ENCODE measurements at regions of chr5 and their contacts with region 1.

Region 1: DNA sequence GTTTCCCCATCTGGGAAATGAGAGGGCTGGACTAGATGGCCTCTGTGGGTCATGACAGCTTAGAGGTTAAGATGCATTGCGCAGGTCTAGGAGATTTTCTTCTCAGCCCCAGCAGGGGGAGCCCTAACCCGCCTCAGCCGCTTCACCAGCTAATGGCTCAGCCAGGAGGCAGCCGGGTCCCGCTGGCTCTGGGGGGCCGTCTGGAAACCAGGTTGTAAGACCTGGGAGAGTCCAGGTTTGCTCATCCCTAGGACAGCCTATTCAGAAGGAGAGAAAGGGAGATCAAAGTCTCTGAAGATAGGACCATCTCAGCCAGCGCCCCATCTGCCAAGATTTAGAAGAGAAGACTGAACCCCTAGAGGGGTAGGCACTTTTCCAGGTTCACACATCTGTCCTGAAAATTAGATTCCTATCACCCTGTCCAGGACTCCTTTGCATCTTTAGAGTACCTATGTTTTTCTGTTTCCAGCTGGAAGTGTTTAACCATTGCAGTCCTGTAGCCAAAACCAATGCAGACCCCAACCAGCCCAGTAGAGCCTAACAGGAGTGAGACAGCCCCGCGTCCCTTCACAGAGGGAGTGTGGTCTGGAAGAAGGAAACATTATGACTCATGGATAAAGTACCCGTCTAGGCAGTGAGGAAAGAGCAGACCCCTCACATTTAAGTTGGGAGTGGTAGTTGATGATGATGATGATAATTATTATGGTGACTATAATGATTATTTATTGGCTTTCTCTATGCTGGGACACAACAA is 27.5 kb downstream of the SPARC start:
- H3K4me3 Mint-ChIP-seq: no peak overlapping the region
- H3K27ac Mint-ChIP-seq: no peak overlapping the region
- H3K4me1 Mint-ChIP-seq: peaks cover 28% of the 10 kb centered on the region
- H3K27me3 Mint-ChIP-seq: no peaks in the 10 kb centered on the region

Region 2: DNA sequence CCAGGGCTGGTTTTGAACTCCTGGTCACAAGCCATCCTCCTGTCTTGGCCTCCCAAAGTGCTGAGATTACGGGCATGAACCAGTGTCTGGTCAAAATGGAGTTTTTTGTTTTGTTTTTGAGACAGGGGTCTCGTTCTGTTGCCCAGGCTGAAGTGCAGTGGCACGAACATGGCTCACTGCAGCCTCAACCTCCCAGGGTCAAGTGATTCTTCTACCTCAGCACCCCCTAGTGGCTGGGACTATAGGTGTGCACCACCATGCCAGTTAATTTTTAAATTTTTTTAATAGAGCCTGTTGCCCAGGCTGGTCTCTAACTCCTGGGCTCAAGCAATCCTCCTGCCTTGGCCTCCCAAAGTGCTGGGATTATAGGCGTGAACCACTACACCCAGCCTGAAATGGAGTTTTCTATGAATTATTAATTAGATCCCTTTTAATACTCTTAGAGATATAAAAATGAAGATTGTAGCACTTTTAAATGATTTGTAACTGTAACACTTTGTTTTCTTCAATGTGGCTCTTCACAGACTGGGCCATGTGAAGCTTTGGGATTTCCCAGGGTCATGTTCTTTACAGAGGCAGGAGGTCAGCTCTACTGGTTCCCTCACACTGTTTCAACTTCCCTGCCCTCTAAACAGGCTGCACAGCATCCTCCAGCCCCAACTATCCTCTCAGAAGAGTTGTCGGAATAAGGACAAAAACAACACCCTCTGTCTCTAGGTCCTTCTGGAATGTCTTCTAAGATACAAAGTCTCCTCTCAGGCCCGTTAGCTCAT is 60.2 kb after region 1 on chr5:
- intact Hi-C with region 1: loop called (anchors 2 kb)
- H3K4me3 Mint-ChIP-seq: no peak overlapping the region
- H3K27ac Mint-ChIP-seq: no peak overlapping the region
- H3K4me1 Mint-ChIP-seq: peaks cover 28% of the 10 kb centered on the region
- H3K27me3 Mint-ChIP-seq: no peaks in the 10 kb centered on the region

Region 3: DNA sequence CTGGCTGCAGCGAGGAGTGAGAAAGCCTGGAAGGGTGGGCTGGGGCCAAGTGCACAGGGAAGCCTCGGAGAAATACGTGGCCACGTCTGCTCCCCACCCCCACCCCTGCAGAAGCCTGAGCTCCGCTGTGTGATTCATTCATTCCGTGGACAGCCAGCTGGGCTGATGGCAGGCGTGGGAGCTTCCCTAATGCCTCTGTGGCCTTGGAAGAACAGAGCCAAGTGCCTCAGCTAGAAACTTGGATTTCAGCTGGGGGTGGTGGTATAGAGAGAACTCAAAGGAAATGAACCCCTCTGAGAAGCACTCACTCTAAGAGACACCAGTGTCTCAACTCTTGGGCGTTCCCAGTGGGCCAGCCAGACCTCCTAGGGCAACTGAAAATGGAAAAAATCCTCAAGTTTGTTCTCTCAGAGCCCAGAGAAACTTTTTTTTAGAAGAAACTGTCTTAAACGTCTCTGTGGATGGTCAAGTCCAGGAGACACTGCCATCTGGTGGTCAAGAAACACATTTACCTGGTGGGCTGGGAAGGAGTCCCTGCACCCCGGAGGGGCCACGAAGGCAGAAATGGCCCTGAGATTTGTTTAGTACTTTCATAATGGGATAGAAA is 81.3 kb after region 1 on chr5:
- intact Hi-C with region 1: loop called (anchors 1 kb)
- H3K4me3 Mint-ChIP-seq: no peak overlapping the region
- H3K27ac Mint-ChIP-seq: no peak overlapping the region
- H3K4me1 Mint-ChIP-seq: peaks cover 17% of the 10 kb centered on the region
- H3K27me3 Mint-ChIP-seq: no peaks in the 10 kb centered on the region